OCI-LY7 (cell line): ENCODE measurements at regions of chrX and their contacts with region 1.

Region 1: DNA sequence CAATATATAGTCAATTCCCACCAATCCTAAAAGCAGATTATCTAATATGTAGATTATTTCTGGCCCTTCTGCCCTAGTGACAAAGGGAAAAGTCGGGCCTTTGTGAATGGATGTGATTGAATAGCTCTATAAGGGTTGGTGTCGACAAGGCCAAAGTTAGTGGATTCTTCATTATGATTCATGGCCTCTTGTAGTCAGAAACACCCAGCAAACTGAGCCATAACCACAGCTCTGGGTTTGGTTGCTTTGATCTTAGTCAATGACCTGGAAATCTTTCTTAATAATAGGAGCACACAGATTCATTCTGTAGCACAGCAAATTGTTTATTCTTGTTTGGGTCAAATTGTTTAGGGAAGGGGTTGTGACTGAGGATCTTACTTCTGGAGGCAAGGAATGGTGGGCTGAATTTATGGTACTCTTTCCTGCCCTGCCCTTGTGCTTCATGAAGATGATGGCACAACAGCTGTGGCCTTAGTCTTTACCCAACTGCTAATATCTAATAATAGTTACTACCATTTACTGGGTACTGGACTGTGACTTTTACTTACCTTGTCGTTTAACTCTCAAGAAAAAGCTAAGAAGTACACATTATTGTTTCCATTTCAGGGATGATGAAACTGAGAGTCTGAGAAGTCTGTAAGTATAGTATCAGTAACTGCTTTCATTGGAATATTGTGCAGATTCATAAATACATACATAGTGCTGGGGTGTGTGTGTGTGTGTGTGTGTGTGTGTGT is 74.0 kb downstream of the AFF2 start:
- DNase-seq: peak; percentile 69
- H3K4me3 ChIP-seq: peak overlapping the region; percentile 47
- H3K27ac ChIP-seq: peak overlapping the region; percentile 95
- H3K4me1 ChIP-seq: peaks cover 84% of the 10 kb centered on the region
- CTCF ChIP-seq: no peak

Region 2: GRCh38 chrX:148541544-148541983 is 32.8 kb before region 1 on chrX:
- CTCF ChIA-PET with region 1: interaction called, 3 read pairs
- POLR2A ChIA-PET with region 1: interaction called, 5 read pairs
- intact Hi-C with region 1: loop called (anchors 2 kb)
- DNase-seq: peak; percentile 58
- H3K4me3 ChIP-seq: peak overlapping the region; percentile 56
- H3K27ac ChIP-seq: peak overlapping the region; percentile 96
- H3K4me1 ChIP-seq: peaks cover 97% of the 10 kb centered on the region
- CTCF ChIP-seq: no peak

Region 3: DNA sequence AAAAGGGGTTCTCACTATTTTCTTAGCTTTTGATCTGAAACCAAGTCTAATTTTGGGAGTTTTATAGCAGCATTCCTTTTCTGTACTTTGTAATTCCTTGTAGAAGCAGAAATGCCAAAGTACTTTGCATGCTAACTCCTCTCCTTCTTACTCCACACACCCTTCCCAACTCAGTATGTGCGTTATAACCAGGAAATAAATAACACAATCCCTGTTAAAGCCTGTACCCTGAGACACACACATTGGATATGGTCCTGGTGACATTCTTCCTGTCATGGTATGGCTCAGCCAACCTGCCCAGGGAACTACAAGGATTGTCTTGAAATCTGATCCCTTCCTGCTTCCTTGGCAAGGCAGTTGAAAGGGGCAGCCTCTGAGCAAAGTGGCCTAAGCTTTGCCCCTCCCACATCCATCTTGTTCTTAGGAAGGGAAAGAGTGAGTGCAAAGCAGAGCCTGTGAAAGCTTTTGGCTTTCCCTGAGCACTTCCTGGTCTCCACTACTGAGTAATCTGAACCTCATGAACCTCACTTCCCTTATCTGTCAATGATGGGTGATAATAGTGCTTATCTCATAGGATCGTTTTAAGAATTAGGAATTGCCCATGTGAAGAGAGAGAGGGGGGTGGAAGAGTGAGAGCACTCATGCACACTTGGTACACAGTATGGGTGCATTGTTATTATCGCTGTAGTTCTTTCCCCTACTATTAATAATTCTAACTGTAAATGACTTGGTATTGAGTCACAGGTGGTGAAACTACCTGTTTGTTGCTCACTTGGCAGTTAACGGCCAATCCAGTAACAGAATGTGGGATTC is 35.3 kb after region 1 on chrX:
- CTCF ChIA-PET with region 1: no interaction called
- POLR2A ChIA-PET with region 1: interaction called, 5 read pairs
- intact Hi-C with region 1: loop called (anchors 2 kb)
- DNase-seq: peak; percentile 86
- H3K4me3 ChIP-seq: peak overlapping the region; percentile 60
- H3K27ac ChIP-seq: peak overlapping the region; percentile 99
- H3K4me1 ChIP-seq: peaks cover 61% of the 10 kb centered on the region
- CTCF ChIP-seq: no peak

Region 4: GRCh38 chrX:148670277-148670676 is 95.9 kb after region 1 on chrX:
- CTCF ChIA-PET with region 1: no interaction called
- POLR2A ChIA-PET with region 1: no interaction called
- intact Hi-C with region 1: loop called (anchors 10 kb)
- DNase-seq: peak; percentile 53
- H3K4me3 ChIP-seq: no peak overlapping the region
- H3K27ac ChIP-seq: peak overlapping the region; percentile 41
- H3K4me1 ChIP-seq: peaks cover 35% of the 10 kb centered on the region
- CTCF ChIP-seq: no peak

Region 5: GRCh38 chrX:148695255-148695654 is 120.8 kb after region 1 on chrX:
- CTCF ChIA-PET with region 1: no interaction called
- POLR2A ChIA-PET with region 1: no interaction called
- intact Hi-C with region 1: loop called (anchors 5 kb)
- DNase-seq: no peak
- H3K4me3 ChIP-seq: no peak overlapping the region
- H3K27ac ChIP-seq: no peak overlapping the region
- H3K4me1 ChIP-seq: peaks cover 38% of the 10 kb centered on the region
- CTCF ChIP-seq: no peak

Region 6: DNA sequence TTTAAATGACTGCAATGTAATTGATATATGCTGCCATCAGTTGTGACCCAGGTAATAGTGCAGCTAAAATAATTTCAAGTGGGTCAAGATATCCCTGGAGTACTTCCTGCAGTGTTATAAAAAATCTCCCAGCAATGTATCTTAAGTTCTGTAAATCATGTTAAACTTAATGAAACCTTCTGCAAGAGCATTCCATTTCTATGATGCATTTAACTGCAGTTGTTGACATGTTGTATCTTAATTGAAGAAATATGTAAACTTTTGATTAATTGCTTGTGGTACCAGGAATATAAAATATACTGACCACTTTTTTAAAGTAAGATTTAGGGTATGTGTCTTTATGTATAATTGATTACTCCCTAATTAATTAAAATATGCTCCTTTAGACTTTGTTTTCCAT is 139.6 kb after region 1 on chrX:
- CTCF ChIA-PET with region 1: no interaction called
- POLR2A ChIA-PET with region 1: no interaction called
- intact Hi-C with region 1: no loop called
- DNase-seq: no peak
- H3K4me3 ChIP-seq: no peak overlapping the region
- H3K27ac ChIP-seq: no peak overlapping the region
- H3K4me1 ChIP-seq: peaks cover 9% of the 10 kb centered on the region
- CTCF ChIP-seq: no peak

Region 7: GRCh38 chrX:148871422-148872160 is 297.2 kb after region 1 on chrX:
- CTCF ChIA-PET with region 1: no interaction called
- POLR2A ChIA-PET with region 1: no interaction called
- intact Hi-C with region 1: no loop called
- DNase-seq: no peak
- H3K4me3 ChIP-seq: no peak overlapping the region
- H3K27ac ChIP-seq: no peak overlapping the region
- H3K4me1 ChIP-seq: no peaks in the 10 kb centered on the region
- CTCF ChIP-seq: no peak